Left ventricle myocardium inferior (tissue), 1 donor: ENCODE measurements at regions of chr2 and their contacts with region 1.

Region 1: GRCh38 chr2:230987137-230988020 is 8.5 kb upstream of the SPATA3 start:
- DNase-seq: peak; percentile 77
- H3K4me3 ChIP-seq: peak overlapping the region; percentile 57
- H3K27ac ChIP-seq: no peak overlapping the region
- H3K4me1 ChIP-seq: peaks cover 4% of the 10 kb centered on the region
- H3K27me3 ChIP-seq: peaks cover 53% of the 10 kb centered on the region
- CTCF ChIP-seq: peak; percentile 94

Region 2: GRCh38 chr2:230828272-230828961 is 159.0 kb before region 1 on chr2:
- intact Hi-C with region 1: loop called (anchors 5 kb)
- DNase-seq: peak; percentile 49
- H3K4me3 ChIP-seq: peak overlapping the region; percentile 60
- H3K27ac ChIP-seq: no peak overlapping the region
- H3K4me1 ChIP-seq: peaks cover 11% of the 10 kb centered on the region
- H3K27me3 ChIP-seq: peaks cover 72% of the 10 kb centered on the region
- CTCF ChIP-seq: no peak

Region 3: GRCh38 chr2:230902180-230902899 is 85.0 kb before region 1 on chr2:
- intact Hi-C with region 1: loop called (anchors 5 kb)
- DNase-seq: peak; percentile 25
- H3K4me3 ChIP-seq: no peak overlapping the region
- H3K27ac ChIP-seq: no peak overlapping the region
- H3K4me1 ChIP-seq: no peaks in the 10 kb centered on the region
- H3K27me3 ChIP-seq: peaks cover 14% of the 10 kb centered on the region
- CTCF ChIP-seq: peak; percentile 87